ENCODE measurements at regions of chr15 and their contacts with region 1.

Region 1: GRCh38 chr15:40274350-40275274 is 8.3 kb downstream of the ANKRD63 start:
- DNase-seq: peak; percentile 79 to 88 (median 82)
- H3K4me3 ChIP-seq: no peak overlapping the region
- H3K27ac ChIP-seq: no peak overlapping the region
- H3K4me1 ChIP-seq: peaks cover 0 to 2% (median 0%) of the 10 kb centered on the region in 3 donors
- H3K27me3 ChIP-seq: peaks cover 2% of the 10 kb centered on the region
- CTCF ChIP-seq: peak; percentile 100

Region 2: DNA sequence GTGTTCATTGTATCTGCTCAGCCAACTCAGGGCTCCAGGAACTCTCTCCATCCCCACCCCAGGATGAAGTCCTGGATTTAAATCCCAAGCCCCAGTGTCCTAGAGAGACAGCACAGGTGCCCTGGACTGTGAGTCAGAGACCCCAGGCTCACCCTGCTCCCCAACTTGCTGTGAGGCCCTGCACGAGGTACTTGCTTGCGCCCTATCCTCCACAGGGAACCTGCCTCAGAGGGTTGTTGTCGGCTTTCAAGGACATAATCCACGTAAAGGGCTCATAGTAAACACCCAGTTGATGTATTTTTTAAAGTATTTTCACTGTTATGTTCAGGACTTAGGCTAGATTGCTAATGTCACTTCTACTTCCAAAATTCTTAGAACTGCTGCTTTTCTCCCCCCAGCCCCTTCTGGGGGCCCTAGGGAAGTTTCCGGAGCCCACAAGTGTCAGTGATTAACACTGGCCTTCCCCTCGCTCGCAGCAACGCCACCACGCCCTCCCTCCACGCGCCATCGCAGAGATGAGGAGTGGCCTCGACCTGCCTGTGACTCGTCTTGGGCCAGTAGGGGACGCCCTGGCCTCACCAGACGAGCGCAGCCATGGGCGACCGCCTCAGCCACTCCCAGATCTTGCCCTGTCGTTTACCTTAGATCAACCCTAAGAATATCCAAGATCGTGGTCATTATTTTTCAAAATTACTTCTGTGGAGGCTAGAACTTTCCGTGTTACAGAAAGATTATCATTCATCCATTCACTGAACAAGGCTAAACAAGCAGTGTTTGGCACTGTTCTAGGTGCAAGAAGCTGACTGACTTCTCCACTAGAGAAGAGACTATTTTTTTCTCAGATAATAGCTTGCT is 229.7 kb before region 1 on chr15:
- intact Hi-C with region 1: loop called (anchors 5 kb)
- DNase-seq: peak; percentile 87 to 95 (median 89)
- H3K4me3 ChIP-seq: peak overlapping the region in 1 of 3 donors; percentile 21
- H3K27ac ChIP-seq: no peak overlapping the region
- H3K4me1 ChIP-seq: peaks cover 3 to 28% (median 10%) of the 10 kb centered on the region in 3 donors
- H3K27me3 ChIP-seq: no peaks in the 10 kb centered on the region
- CTCF ChIP-seq: peak; percentile 99

Region 3: GRCh38 chr15:40217159-40217824 is 57.3 kb before region 1 on chr15:
- intact Hi-C with region 1: loop called (anchors 5 kb)
- DNase-seq: peak in 3 of 5 donors; percentile 61 to 89 (median 88)
- H3K4me3 ChIP-seq: no peak overlapping the region
- H3K27ac ChIP-seq: no peak overlapping the region
- H3K4me1 ChIP-seq: no peaks in the 10 kb centered on the region
- H3K27me3 ChIP-seq: no peaks in the 10 kb centered on the region
- CTCF ChIP-seq: peak; percentile 86

Region 4: DNA sequence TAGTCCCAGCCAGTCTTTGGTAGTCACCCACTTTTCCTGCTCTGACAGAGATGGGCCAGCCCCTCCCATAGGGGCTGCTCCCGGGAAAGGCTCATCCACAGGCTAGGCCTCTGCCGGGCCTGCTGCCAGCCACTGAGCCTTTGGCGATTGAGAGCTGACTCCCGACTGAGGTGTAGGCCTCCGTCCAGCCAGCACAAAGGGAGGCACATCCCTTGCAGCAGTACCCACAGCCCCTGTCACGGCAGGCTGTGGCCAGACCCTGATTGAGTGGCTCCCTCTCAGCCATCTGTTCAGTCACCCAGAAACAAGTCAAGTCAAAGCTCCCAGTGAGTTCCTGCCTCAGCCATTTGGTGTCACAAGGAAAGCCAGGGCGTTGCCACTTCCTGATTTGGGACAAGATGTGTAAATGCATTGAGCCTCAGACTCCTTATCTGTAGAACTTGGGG is 42.0 kb before region 1 on chr15:
- intact Hi-C with region 1: no loop called
- DNase-seq: no peak
- H3K4me3 ChIP-seq: no peak overlapping the region
- H3K27ac ChIP-seq: no peak overlapping the region
- H3K4me1 ChIP-seq: peaks cover 0 to 4% (median 0%) of the 10 kb centered on the region in 3 donors
- H3K27me3 ChIP-seq: no peaks in the 10 kb centered on the region
- CTCF ChIP-seq: no peak

Region 5: DNA sequence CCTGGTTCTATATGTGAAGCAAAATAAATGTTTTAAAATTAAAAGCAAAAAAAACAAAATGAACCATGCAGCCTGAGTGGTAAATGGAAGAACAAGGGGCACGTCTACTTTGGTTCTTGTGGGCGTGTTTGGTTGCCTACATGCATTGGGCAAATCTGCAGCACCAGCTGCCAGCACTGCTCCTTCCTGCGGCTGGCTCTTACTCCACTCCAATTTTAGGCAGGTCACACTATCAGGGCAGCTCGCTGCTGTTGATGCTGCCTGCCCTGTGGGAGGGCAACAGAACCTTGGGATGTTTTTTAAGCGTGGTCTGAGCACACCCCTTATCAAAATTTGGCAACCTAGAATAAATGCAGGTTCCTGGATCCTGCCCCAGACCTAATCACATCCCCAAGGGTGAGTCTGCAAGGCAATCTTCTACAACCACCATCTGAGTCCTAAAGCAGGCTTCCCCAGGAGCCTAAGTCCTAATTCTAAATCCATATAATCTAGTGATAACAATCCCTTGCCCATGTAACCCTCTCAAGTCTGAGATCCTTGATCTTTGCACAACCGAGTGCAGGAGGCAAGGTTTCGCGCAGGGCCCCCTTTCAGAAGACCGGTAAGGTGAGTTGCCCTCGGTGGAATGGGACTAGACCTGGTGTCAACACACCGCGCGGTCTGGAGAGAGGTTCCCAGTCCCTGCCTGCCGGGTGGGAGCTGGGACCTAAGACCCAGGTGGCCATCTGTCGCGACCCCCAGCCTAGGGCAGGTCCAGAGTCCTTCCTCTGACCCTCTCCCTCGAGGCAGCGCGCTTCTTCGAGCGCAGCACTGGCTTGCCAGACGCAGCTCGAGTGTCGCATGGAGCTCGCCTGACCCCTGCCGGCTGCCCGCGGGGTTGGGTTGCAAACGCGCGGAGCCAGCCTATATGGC is 146.9 kb after region 1 on chr15:
- intact Hi-C with region 1: loop called (anchors 10 kb)
- DNase-seq: peak; percentile 78 to 92 (median 83)
- H3K4me3 ChIP-seq: no peak overlapping the region
- H3K27ac ChIP-seq: no peak overlapping the region
- H3K4me1 ChIP-seq: peaks cover 0 to 13% (median 12%) of the 10 kb centered on the region in 3 donors
- H3K27me3 ChIP-seq: no peaks in the 10 kb centered on the region
- CTCF ChIP-seq: peak; percentile 98

Measured in kidney (tissue), 22 donors.